ENCODE measurements at regions of chr18 and their contacts with region 1.

Region 1: DNA sequence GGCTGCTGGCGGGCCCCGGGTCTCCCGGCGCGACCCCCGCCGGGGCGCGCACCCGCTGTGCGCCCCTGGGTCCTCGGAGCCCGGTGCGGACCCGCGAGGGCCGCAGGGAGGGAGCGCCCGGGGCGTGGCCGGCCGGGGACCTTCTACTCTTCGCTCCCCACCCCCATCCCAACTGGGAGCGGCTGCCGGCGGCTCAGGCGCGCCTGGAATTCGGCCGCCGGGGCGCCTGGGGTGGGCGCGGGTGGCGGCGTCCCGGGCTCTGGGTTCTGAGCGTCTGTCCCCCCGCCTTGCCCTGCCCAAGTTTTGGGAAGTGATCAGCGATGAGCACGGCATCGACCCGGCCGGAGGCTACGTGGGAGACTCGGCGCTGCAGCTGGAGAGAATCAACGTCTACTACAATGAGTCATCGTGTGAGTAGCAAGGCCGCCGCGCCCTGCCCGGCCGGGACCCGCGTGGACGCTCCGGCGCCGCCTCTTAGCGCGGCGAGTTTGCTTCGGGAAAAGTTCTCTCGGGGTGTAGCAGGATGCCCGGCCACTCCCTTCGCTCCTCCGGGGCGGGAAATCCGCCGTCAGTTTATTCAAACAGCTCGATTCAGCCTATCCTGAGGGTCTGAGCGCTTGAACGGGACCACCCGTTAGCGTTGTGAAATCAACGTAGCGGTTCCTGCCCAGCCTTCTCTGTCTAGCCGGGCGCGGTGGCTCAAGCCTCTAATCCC is 502 bp downstream of the TUBB6 start:
- DNase-seq: peak; percentile 52
- H3K4me3 ChIP-seq: peak overlapping the region; percentile 89
- H3K27me3 ChIP-seq: no peaks in the 10 kb centered on the region
- CTCF ChIP-seq: no peak

Region 2: GRCh38 chr18:11387880-11388279 is 920.7 kb before region 1 on chr18:
- CTCF ChIA-PET with region 1: no interaction called
- POLR2A ChIA-PET with region 1: interaction called, 10 read pairs
- DNase-seq: no peak
- H3K4me3 ChIP-seq: no peak overlapping the region
- H3K27me3 ChIP-seq: no peaks in the 10 kb centered on the region
- CTCF ChIP-seq: no peak; the same call in 1 of the 2 replicates

Region 3: DNA sequence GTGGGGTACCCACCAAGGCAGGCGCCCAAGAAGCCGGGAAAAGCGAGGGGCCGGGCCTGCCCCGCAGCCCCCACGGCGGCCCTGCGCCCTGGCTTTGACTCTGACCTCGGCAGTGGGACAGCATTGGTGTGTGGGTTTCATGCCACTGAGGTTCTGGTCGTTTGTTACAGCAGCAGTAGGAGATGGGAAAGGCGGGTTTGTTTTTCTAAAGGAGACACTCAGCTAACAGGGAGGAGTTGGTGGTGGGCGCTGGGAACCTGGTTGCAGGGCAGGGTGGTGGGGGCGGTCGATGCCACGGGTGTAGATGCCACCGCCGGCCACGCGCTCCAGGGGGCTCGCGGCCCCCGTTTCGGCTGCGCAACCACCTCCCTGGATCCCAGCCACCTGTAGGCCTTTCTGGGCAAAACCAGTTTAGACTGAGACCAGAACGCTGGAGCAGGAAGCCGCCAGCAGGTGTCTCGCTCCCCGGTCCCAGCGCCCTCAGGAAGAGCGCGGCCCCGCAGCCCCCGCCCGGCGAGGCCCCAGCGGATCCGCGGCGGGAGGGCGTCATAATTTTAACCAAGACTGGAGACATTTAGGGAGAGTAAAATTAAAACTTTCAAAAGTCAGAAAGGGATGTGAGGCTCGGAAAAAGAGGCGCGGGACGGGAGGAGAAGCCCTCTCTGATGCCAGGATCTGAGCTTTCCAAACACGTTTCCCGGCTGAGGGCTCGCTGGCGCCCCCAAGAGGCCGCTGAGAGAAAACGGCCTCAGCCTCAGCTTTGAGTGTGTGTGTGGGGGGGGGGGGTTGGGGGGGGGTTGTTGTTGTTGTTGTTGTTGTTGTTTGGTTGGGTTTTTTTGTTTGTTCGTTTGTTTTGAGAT is 36.9 kb before region 1 on chr18:
- CTCF ChIA-PET with region 1: interaction called, 14 read pairs
- POLR2A ChIA-PET with region 1: interaction called, 5 read pairs
- DNase-seq: no peak
- H3K4me3 ChIP-seq: peak overlapping the region; percentile 39
- H3K27me3 ChIP-seq: peaks cover 3% of the 10 kb centered on the region; the same call in 1 of the 2 replicates
- CTCF ChIP-seq: peak; percentile 71; the same call in 1 of the 2 replicates

Region 4: GRCh38 chr18:12278741-12279682 is 29.5 kb before region 1 on chr18:
- CTCF ChIA-PET with region 1: interaction called, 5 read pairs
- POLR2A ChIA-PET with region 1: interaction called, 11 read pairs
- DNase-seq: peak; percentile 83
- H3K4me3 ChIP-seq: peak overlapping the region; percentile 42
- H3K27me3 ChIP-seq: no peaks in the 10 kb centered on the region
- CTCF ChIP-seq: no peak

Region 5: GRCh38 chr18:12287684-12288402 is 20.7 kb before region 1 on chr18:
- CTCF ChIA-PET with region 1: interaction called, 3 read pairs
- POLR2A ChIA-PET with region 1: interaction called, 11 read pairs
- DNase-seq: peak; percentile 92
- H3K4me3 ChIP-seq: peak overlapping the region; percentile 39
- H3K27me3 ChIP-seq: no peaks in the 10 kb centered on the region
- CTCF ChIP-seq: peak; percentile 26; the same call in 1 of the 2 replicates

Region 6: GRCh38 chr18:12327510-12328178 is 19.1 kb after region 1 on chr18:
- CTCF ChIA-PET with region 1: interaction called, 21 read pairs
- POLR2A ChIA-PET with region 1: interaction called, 3 read pairs
- DNase-seq: no peak
- H3K4me3 ChIP-seq: no peak overlapping the region
- H3K27me3 ChIP-seq: no peaks in the 10 kb centered on the region
- CTCF ChIP-seq: peak; percentile 91

Region 7: GRCh38 chr18:12345491-12346239 is 37.1 kb after region 1 on chr18:
- CTCF ChIA-PET with region 1: no interaction called
- POLR2A ChIA-PET with region 1: no interaction called
- DNase-seq: no peak
- H3K4me3 ChIP-seq: no peak overlapping the region
- H3K27me3 ChIP-seq: no peaks in the 10 kb centered on the region
- CTCF ChIP-seq: no peak

Measured in BJ (cell line).